Sigmoid colon (tissue), 7 donors: ENCODE measurements at regions of chr12 and their contacts with region 1.

Region 1: DNA sequence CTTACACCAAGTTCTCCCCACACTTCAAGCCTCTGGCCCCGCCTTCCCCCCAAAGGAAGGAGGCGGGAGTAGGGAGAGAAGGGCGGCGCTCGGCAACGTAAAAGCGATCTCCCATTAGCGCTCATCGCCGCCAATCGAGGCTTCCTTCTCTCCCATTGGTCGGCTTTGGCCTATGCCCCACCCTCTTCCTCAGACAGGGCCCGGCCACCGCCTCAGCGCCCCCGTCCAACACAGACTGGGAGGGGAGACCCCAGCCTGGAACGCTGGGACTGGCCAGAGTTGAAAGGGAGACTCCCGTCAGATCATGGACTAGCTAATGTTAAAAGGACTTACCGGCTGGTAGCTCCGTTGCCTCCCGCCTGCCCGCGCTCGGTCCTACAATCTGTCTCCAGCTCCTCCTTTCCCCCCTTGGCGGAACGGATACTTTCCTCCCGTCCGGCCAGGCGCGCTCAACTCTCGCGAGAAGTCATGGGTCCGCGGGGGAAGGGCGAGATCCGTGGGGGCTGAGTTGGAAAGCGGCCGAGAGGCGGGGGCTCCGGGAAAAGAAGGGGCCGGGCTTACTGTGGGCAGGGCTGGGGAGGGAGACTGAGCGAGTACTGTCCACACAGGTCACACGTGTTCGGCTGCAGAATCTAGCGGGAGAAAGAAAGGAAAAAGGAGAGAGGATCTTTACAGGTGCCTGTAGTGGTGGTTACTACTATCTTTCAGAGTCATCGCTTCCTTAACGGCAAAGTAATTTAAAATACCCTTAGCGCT is at the start of gene ATF7:
- DNase-seq: peak; percentile 99
- H3K4me3 ChIP-seq: peak within 1 kb of the TSS; percentile 59 to 70 (median 67)
- H3K27ac ChIP-seq: peak within 1 kb of the TSS; percentile 89 to 93 (median 90)
- H3K4me1 ChIP-seq: peaks cover 0 to 39% (median 32%) of the 10 kb centered on the region in 4 donors
- H3K27me3 ChIP-seq: no peaks in the 10 kb centered on the region
- CTCF ChIP-seq: no peak
- EP300 ChIP-seq: no peak
- POLR2A ChIP-seq: peak in 1 of 2 donors; percentile 44
- total RNA-seq, gene ATF7: 20.3 to 36.0 (median 27.1) TPM

Region 2: GRCh38 chr12:53476769-53477209 is 149.3 kb before region 1 on chr12:
- intact Hi-C with region 1: no loop called
- DNase-seq: no peak
- H3K4me3 ChIP-seq: no peak overlapping the region
- H3K27ac ChIP-seq: peak overlapping the region in 3 of 4 donors; percentile 6 to 29 (median 27)
- H3K4me1 ChIP-seq: peaks cover 0 to 43% (median 20%) of the 10 kb centered on the region in 4 donors
- H3K27me3 ChIP-seq: no peaks in the 10 kb centered on the region
- CTCF ChIP-seq: no peak
- EP300 ChIP-seq: no peak
- POLR2A ChIP-seq: no peak

Region 3: GRCh38 chr12:53675651-53676453 is 49.7 kb after region 1 on chr12 and contains the start of gene ATP5MC2:
- intact Hi-C with region 1: loop called (anchors 1 kb)
- DNase-seq: peak; percentile 99
- H3K4me3 ChIP-seq: peak within 1 kb of the TSS; percentile 68 to 82 (median 76)
- H3K27ac ChIP-seq: peak within 1 kb of the TSS; percentile 91 to 97 (median 94)
- H3K4me1 ChIP-seq: peaks cover 0 to 43% (median 36%) of the 10 kb centered on the region in 4 donors
- H3K27me3 ChIP-seq: no peaks in the 10 kb centered on the region
- CTCF ChIP-seq: peak; percentile 95 to 100 (median 100)
- EP300 ChIP-seq: peak in 1 of 4 donors; percentile 1
- POLR2A ChIP-seq: peak; percentile 37 to 57
- total RNA-seq, gene ATP5MC2: 409 to 571 (median 531) TPM